MCF 10A (cell line): ENCODE measurements at regions of chr9 and their contacts with region 1.

Region 1: DNA sequence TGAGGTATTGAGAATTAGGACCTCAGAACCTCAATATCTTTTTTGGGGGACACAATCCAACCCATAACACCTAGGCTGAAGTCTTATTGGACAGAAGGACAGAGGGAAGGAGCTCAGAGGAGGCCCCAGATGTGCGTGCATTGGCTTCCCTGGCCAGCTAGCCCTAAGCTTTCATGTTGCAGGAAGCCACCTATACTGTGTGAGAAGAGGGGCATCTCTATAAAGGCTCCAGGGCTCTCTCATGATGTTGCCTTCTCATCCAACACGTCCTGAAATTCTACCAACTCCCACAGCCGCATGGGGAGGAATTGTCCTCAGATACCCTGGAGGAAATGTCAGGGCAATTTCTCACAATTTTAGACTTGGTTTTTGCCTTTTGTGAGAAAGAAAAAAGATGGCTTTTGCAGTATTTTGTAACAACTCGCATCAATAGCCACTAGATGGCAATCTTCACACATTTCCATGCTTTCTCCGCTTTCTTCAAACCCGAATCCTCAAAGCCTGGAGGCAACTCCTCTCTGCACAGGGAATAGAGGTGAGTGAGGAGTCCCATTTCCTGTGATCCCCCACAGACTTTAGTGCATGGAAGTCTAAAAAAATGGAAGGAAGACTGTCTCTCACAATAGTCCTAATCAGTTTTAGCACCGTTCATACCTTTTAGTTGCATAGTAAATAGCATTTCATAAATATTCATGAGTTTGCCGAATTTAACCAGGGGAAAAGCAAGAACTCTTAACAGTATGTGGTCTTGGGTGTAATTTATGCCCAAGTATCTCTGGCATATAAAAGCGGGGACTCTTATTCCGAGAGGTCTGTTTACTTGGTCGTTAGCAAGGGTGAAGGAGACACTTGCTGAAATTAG is 7.4 kb upstream of the PPP3R2 start:
- DNase-seq: peak; percentile 72
- H3K4me3 Mint-ChIP-seq: no peak overlapping the region
- H3K27ac Mint-ChIP-seq: no peak overlapping the region
- H3K4me1 Mint-ChIP-seq: no peaks in the 10 kb centered on the region
- H3K27me3 Mint-ChIP-seq: peaks cover 62% of the 10 kb centered on the region
- CTCF ChIP-seq: peak; percentile 50

Region 2: GRCh38 chr9:101727612-101728524 is 125.7 kb after region 1 on chr9:
- CTCF ChIA-PET with region 1: interaction called, 3 read pairs
- POLR2A ChIA-PET with region 1: no interaction called
- intact Hi-C with region 1: loop called (anchors 1 kb)
- DNase-seq: peak; percentile 47
- H3K4me3 Mint-ChIP-seq: no peak overlapping the region
- H3K27ac Mint-ChIP-seq: no peak overlapping the region
- H3K4me1 Mint-ChIP-seq: no peaks in the 10 kb centered on the region
- H3K27me3 Mint-ChIP-seq: peaks cover 57% of the 10 kb centered on the region
- CTCF ChIP-seq: peak; percentile 25

Region 3: DNA sequence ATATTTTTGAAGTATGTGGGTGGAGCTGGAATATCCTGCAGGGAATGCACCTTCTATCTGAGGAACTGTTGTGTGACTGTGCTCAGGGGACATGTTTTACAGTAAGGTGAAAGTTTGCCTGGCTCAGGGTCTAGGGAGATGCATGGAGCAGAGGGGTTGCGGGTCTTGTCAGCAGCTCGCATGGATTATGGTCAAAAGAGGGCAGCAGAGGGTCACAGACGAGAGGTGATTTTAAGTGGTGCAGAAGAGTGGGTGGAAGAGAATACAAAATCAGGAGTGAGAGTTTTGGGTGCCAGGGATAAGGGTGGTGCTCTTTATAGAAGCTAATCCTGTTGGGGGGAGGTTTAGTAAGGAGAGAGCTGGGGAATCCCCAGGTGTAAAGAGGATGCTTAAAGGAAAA is 189.8 kb after region 1 on chr9:
- CTCF ChIA-PET with region 1: interaction called, 4 read pairs
- POLR2A ChIA-PET with region 1: no interaction called
- intact Hi-C with region 1: loop called (anchors 5 kb)
- DNase-seq: peak; percentile 64
- H3K4me3 Mint-ChIP-seq: no peak overlapping the region
- H3K27ac Mint-ChIP-seq: no peak overlapping the region
- H3K4me1 Mint-ChIP-seq: no peaks in the 10 kb centered on the region
- H3K27me3 Mint-ChIP-seq: peaks cover 23% of the 10 kb centered on the region
- CTCF ChIP-seq: peak; percentile 64

Region 4: DNA sequence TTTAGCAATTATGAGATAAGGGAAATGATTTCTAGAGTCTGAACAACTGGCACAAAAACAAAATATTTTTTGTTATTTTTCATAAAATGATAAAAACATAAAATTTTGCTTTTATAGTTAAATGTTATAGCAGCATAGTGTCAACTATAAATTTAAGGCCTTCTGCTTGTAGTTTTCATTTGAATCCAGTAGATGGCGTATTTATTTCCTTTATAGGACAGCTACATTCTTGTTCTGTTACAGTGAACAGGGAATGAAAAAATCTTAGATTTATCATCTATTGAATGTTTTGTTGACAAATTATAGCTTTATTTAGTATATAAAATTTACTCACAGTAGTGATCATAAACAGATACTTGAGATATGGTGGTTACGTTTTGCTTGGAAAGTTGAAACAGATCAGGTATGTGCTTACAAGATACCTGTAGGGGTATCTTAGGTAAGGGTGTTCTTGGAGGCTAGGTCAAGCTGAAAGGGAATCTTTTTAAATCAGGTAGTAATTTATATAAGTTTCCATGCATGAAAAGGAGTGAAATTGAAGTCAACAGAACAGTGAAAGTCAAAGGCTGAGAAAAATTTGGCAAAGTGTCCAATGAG is 375.6 kb after region 1 on chr9:
- CTCF ChIA-PET with region 1: interaction called, 3 read pairs
- POLR2A ChIA-PET with region 1: no interaction called
- intact Hi-C with region 1: loop called (anchors 10 kb)
- DNase-seq: peak; percentile 45
- H3K4me3 Mint-ChIP-seq: no peak overlapping the region
- H3K27ac Mint-ChIP-seq: no peak overlapping the region
- H3K4me1 Mint-ChIP-seq: no peaks in the 10 kb centered on the region
- H3K27me3 Mint-ChIP-seq: peaks cover 74% of the 10 kb centered on the region
- CTCF ChIP-seq: peak; percentile 70